ENCODE measurements at regions of chr1 and their contacts with region 1.

Region 1: DNA sequence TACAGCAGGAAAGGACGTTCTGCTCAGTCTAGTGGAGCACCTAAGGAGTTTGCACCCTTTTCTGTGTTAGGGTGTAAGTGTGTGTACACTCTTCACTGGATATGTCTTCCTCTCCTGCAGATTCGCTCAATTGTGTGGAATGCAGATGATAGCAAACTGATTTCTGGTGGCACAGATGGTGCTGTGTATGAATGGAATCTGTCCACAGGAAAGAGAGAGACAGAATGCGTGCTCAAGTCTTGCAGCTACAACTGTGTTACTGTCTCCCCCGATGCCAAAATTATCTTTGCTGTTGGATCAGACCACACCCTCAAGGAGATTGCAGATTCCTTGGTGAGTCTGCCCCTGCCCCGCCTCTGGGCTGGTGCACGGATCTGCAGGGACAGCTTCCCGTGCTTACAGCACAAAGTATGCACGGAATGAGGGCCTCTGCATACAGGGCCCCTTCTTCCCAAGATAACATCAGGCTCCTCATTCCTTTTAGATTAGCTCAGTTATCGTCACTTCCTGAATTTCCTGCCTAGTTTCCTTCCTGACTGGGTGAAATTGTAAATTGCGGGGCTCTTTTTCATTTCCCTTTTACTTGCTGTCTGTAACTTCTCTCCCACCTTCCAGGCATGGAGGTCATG is 34.6 kb downstream of the CFAP57 start:
- DNase-seq: peak in 4 of 5 donors; percentile 40 to 62 (median 48)
- ATAC-seq: peak; percentile 74 to 94 (median 88)
- H3K4me3 ChIP-seq: peak overlapping the region in 4 of 12 donors; percentile 1 to 10 (median 8)
- H3K27ac ChIP-seq: peak overlapping the region in 11 of 12 donors; percentile 38 to 83 (median 61)
- H3K4me1 ChIP-seq: peaks cover 0 to 30% (median 20%) of the 10 kb centered on the region in 12 donors
- H3K27me3 ChIP-seq: no peaks in the 10 kb centered on the region
- CTCF ChIP-seq: no peak
- POLR2A ChIP-seq: no peak

Region 2: GRCh38 chr1:43171876-43172526 is 34.7 kb before region 1 on chr1 and contains the starts of genes CFAP57 and EBNA1BP2:
- intact Hi-C with region 1: loop called in 3 of 10 experiments (anchors 2 kb)
- DNase-seq: peak; percentile 87 to 92 (median 90)
- ATAC-seq: peak; percentile 82 to 96 (median 94)
- H3K4me3 ChIP-seq: peak within 1 kb of the TSS; percentile 72 to 98 (median 88)
- H3K27ac ChIP-seq: peak within 1 kb of the TSS in 10 of 12 donors; percentile 35 to 72 (median 48)
- H3K4me1 ChIP-seq: peaks cover 0 to 19% (median 12%) of the 10 kb centered on the region in 12 donors
- H3K27me3 ChIP-seq: peaks cover 0 to 13% (median 0%) of the 10 kb centered on the region in 9 donors
- CTCF ChIP-seq: no peak
- POLR2A ChIP-seq: peak in 1 of 2 donors; percentile 33
- total RNA-seq, gene CFAP57: 0.07 to 0.34 (median 0.16) TPM in 4 of 9 donors, not detected in the others
- total RNA-seq, gene EBNA1BP2: 22.8 to 62.1 (median 27.2) TPM

Measured in heart left ventricle (tissue), 16 donors.